Activated CD8-positive, alpha-beta T cell treated with anti-CD3 and anti-CD28 coated beads for 36 hours (primary cell): ENCODE measurements at regions of chr15 and their contacts with region 1.

Region 1: GRCh38 chr15:94324117-94324826 is 92.9 kb downstream of the MCTP2 start:
- DNase-seq: peak; percentile 73
- ATAC-seq: peak; percentile 87
- H3K4me3 Mint-ChIP-seq: no peak overlapping the region
- H3K27ac Mint-ChIP-seq: peak overlapping the region; percentile 51
- H3K4me1 Mint-ChIP-seq: peaks cover 11% of the 10 kb centered on the region
- H3K27me3 Mint-ChIP-seq: no peaks in the 10 kb centered on the region
- CTCF ChIP-seq: peak; percentile 87

Region 2: DNA sequence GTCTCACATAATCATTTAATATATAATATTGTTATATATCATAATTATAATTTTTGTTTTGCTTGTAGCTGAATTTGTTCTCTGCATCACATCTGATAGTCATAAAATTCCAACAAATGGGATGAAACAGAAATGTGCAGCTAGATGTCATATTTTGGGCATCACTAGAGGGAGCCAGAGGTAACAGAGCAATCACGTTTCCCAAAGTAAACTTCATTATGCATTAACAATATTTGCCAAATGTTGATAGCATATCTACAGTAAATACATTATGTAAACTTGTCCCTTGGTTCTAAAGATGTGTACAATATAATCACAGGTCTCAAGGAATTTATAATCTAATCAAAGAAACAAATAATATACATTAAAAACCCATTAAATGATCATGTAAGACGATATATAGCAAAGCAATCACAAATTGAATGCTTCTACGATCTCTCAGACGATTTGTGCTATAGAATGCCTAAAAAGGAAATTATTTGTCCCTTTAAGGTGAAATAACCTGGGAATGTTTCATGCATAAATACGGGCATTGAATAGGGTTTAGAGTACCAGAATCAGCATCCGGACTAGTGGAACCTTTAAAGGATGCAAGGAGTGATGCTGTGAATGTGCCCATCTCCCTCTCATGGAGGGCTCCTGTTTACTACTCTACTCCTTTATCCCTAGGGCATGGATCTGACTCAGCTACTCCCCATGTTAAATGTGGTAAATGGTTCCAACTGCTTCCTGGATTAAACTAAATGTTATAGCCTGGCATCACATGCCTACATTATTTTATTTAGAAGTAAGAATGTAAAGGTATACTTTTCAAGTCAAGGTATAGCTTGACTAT is 327.0 kb before region 1 on chr15:
- CTCF ChIA-PET with region 1: no interaction called
- POLR2A ChIA-PET with region 1: no interaction called
- intact Hi-C with region 1: no loop called
- DNase-seq: no peak
- ATAC-seq: no peak
- H3K4me3 Mint-ChIP-seq: no peak overlapping the region
- H3K27ac Mint-ChIP-seq: no peak overlapping the region
- H3K4me1 Mint-ChIP-seq: no peaks in the 10 kb centered on the region
- H3K27me3 Mint-ChIP-seq: no peaks in the 10 kb centered on the region
- CTCF ChIP-seq: peak; percentile 81

Region 3: DNA sequence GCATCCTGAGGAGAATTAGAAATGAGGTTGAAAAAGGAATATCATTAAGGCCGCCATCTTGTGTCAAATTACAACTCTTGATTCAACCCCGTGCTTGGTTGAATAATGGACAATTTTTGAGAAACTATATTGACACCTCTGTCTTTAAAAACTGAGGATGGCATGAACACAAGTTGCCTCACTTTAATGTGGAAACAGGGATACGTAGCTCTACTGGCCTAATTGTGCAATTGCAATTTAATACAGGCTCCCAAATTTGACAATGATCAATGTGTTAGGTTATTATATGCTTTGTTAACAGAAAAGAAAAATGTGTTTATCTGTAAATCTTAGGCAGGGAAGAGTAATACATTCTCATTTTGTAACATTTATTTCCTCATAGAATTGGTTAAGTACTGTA is 170.0 kb before region 1 on chr15:
- CTCF ChIA-PET with region 1: interaction called, 325 read pairs
- POLR2A ChIA-PET with region 1: no interaction called
- intact Hi-C with region 1: no loop called
- DNase-seq: no peak
- ATAC-seq: no peak
- H3K4me3 Mint-ChIP-seq: no peak overlapping the region
- H3K27ac Mint-ChIP-seq: no peak overlapping the region
- H3K4me1 Mint-ChIP-seq: no peaks in the 10 kb centered on the region
- H3K27me3 Mint-ChIP-seq: peaks cover 18% of the 10 kb centered on the region
- CTCF ChIP-seq: no peak

Region 4: GRCh38 chr15:94174399-94174802 is 149.9 kb before region 1 on chr15:
- CTCF ChIA-PET with region 1: interaction called, 14 read pairs
- POLR2A ChIA-PET with region 1: no interaction called
- intact Hi-C with region 1: no loop called
- DNase-seq: peak; percentile 54
- ATAC-seq: peak; percentile 93
- H3K4me3 Mint-ChIP-seq: no peak overlapping the region
- H3K27ac Mint-ChIP-seq: no peak overlapping the region
- H3K4me1 Mint-ChIP-seq: peaks cover 27% of the 10 kb centered on the region
- H3K27me3 Mint-ChIP-seq: peaks cover 2% of the 10 kb centered on the region
- CTCF ChIP-seq: no peak

Region 5: GRCh38 chr15:94230956-94231722 is 93.1 kb before region 1 on chr15 and contains the start of gene MCTP2:
- CTCF ChIA-PET with region 1: interaction called, 40 read pairs
- POLR2A ChIA-PET with region 1: interaction called, 16 read pairs
- intact Hi-C with region 1: loop called (anchors 5 kb)
- DNase-seq: peak; percentile 92
- ATAC-seq: peak; percentile 86
- H3K4me3 Mint-ChIP-seq: peak within 1 kb of the TSS; percentile 91
- H3K27ac Mint-ChIP-seq: peak within 1 kb of the TSS; percentile 96
- H3K4me1 Mint-ChIP-seq: peaks cover 67% of the 10 kb centered on the region
- H3K27me3 Mint-ChIP-seq: no peaks in the 10 kb centered on the region
- CTCF ChIP-seq: no peak
- total RNA-seq, gene MCTP2: 16.2 to 18.3 TPM

Region 6: DNA sequence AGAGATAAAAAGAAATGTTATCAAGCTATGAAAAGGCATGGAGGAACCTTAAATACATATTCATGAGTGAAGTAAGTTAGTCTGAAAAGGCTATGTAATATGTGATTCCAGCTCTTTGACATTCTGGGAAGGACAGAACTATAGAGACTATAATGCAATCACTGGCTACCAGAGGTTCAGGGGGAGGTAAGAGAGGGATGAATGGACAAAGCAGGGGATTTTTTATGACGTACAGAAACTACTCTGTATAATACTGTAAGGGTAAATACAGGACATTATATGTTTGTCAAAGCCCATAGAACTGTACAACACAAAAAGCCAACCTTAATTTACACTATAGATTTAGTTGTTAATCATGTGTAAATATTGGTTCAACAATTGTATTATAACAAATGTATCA is 46.8 kb before region 1 on chr15:
- CTCF ChIA-PET with region 1: interaction called, 11 read pairs
- POLR2A ChIA-PET with region 1: no interaction called
- intact Hi-C with region 1: no loop called
- DNase-seq: no peak
- ATAC-seq: no peak
- H3K4me3 Mint-ChIP-seq: no peak overlapping the region
- H3K27ac Mint-ChIP-seq: no peak overlapping the region
- H3K4me1 Mint-ChIP-seq: peaks cover 52% of the 10 kb centered on the region
- H3K27me3 Mint-ChIP-seq: no peaks in the 10 kb centered on the region
- CTCF ChIP-seq: no peak

Region 7: GRCh38 chr15:94306700-94307650 is 17.3 kb before region 1 on chr15:
- CTCF ChIA-PET with region 1: interaction called, 59 read pairs
- POLR2A ChIA-PET with region 1: interaction called, 5 read pairs
- intact Hi-C with region 1: no loop called
- DNase-seq: peak; percentile 46
- ATAC-seq: peak; percentile 68
- H3K4me3 Mint-ChIP-seq: peak overlapping the region; percentile 18
- H3K27ac Mint-ChIP-seq: peak overlapping the region; percentile 92
- H3K4me1 Mint-ChIP-seq: peaks cover 43% of the 10 kb centered on the region
- H3K27me3 Mint-ChIP-seq: no peaks in the 10 kb centered on the region
- CTCF ChIP-seq: no peak

Region 8: DNA sequence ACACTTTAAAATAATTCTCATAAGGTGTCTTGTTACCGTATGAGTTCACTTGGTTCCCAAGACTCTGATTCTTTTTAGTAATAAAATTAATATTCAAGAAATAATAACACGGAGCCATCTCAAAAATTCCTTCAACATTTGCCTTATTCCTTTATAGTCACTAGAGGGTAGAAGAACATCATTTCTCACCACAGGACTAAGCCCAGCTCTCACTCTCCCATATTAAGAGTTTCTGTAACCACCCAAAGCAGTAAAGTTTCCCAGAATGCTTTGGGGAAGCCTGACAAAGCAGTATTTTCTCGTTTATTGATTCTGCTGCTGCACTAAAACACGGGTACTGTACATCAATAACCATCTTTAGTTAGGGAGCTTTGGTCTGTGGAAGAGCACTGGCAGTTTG is 22.0 kb after region 1 on chr15:
- CTCF ChIA-PET with region 1: interaction called, 12 read pairs
- POLR2A ChIA-PET with region 1: no interaction called
- intact Hi-C with region 1: no loop called
- DNase-seq: no peak
- ATAC-seq: no peak
- H3K4me3 Mint-ChIP-seq: no peak overlapping the region
- H3K27ac Mint-ChIP-seq: no peak overlapping the region
- H3K4me1 Mint-ChIP-seq: no peaks in the 10 kb centered on the region
- H3K27me3 Mint-ChIP-seq: no peaks in the 10 kb centered on the region
- CTCF ChIP-seq: no peak

Region 9: DNA sequence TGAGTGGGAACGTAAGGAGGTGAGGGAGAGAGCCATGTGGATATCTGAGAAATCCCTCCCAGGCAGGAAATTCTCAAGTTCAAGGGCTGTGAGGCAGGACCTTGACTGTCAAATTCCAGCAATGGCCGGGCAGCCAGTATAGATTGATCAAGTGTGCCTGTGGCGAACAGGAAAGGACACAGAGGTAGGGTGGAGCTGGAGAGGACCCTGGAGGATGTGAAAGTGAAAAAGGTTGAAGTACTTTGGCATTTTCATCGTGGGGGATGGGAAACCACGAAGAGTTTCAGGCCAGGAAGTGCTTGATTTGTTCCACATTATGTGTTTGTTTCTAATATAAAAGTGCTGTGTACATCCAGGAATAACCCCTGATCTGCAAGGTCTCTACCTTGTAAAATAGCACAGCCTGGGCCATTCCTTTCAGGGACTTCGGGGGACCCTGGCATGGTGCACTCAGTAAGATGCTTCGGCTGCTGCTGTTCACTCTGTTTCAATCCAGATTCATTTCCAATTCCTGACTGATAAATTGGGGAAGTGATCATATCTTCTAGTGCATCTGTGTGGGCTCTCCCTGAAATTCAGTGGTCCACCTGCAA is 63.7 kb after region 1 on chr15:
- CTCF ChIA-PET with region 1: no interaction called
- POLR2A ChIA-PET with region 1: no interaction called
- intact Hi-C with region 1: no loop called
- DNase-seq: peak; percentile 21
- ATAC-seq: peak; percentile 30
- H3K4me3 Mint-ChIP-seq: no peak overlapping the region
- H3K27ac Mint-ChIP-seq: no peak overlapping the region
- H3K4me1 Mint-ChIP-seq: peaks cover 16% of the 10 kb centered on the region
- H3K27me3 Mint-ChIP-seq: no peaks in the 10 kb centered on the region
- CTCF ChIP-seq: no peak